ENCODE measurements at regions of chr1 and their contacts with region 1.

Region 1: GRCh38 chr1:201154389-201155165 is at the start of gene TMEM9:
- DNase-seq: peak; percentile 97
- ATAC-seq: peak; percentile 97
- total RNA-seq, gene TMEM9: 26.6 TPM

Region 2: DNA sequence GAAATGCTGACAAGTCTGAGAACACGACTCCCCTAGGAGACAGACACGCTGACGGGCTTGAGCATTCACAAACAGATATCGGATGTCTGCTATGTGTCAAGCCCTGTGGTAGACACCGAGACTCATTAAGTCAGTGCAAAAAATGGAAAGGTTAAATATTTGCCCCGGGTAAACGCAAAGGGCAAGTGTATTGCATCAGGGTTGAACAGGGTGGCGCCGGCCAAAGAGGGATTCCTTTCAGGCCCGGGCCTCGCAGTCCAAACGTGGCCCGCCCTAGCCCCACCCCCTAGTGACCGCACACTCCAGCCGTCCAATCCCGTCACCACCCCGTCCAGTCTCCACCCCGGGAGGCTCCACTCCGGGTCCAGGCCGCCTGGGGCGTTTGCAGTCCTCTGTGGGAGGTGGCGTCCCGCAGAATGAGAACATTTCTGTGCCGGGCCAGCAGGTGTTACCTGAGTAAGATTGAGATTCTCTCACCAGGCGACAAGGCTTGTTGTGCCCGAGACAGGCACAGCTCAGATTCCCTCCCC is 16.0 kb after region 1 on chr1:
- intact Hi-C with region 1: loop called (anchors 1 kb)
- DNase-seq: peak; percentile 96
- ATAC-seq: peak; percentile 99

Region 3: DNA sequence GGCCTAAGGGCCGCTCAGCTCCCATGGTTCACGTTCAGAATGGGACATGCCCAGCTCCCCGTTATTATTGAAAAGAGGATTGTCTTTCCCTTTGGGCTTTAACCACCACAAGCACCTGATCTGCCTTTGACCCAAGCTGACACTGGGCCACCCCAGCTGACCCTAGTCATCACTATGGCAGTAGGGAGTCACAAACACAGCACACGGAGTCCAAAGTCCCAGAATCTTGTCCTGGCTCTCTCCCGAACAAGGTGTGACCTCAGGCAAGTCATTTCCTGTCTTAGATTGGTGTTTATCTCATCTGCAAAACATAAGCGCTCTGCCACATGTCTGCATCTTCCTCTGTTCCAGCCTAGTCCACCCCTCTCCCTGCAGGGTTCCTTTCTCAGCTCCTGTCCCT is 67.5 kb after region 1 on chr1:
- intact Hi-C with region 1: loop called (anchors 2 kb)
- DNase-seq: no peak
- ATAC-seq: no peak

Region 4: DNA sequence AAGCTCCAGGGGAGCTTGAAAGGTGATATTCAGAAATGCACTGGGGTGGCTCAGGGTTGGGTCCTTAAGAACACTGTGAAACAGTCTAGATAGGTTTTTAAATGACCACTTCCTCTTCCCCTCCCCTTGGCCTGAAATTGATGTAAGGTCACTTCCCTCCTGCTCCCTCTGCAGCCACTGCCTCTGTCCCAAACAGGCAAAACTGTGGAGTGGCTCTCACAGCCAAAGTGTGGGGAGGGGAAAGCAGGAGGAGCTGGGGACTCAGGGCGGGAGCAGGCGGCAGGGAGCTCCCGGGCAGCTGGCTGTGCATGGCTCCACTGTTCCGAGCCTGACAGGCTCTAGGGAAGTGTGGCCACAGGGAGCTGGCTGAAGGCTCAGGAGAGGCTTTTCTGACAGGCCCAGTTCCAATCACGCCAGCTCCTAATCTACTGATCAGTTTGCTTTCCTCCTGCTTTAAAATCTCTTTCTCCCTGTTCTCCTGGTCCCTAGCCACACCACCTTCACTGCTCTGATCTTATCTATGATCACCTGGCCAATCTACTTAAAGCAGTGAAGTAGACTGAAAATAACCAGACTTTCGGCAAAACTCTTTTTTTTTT is 357.5 kb after region 1 on chr1:
- intact Hi-C with region 1: no loop called
- DNase-seq: peak; percentile 86
- ATAC-seq: peak; percentile 86

Measured in Right ventricle myocardium inferior (tissue), 1 donor.